ENCODE measurements at regions of chr17 and their contacts with region 1.

Region 1: DNA sequence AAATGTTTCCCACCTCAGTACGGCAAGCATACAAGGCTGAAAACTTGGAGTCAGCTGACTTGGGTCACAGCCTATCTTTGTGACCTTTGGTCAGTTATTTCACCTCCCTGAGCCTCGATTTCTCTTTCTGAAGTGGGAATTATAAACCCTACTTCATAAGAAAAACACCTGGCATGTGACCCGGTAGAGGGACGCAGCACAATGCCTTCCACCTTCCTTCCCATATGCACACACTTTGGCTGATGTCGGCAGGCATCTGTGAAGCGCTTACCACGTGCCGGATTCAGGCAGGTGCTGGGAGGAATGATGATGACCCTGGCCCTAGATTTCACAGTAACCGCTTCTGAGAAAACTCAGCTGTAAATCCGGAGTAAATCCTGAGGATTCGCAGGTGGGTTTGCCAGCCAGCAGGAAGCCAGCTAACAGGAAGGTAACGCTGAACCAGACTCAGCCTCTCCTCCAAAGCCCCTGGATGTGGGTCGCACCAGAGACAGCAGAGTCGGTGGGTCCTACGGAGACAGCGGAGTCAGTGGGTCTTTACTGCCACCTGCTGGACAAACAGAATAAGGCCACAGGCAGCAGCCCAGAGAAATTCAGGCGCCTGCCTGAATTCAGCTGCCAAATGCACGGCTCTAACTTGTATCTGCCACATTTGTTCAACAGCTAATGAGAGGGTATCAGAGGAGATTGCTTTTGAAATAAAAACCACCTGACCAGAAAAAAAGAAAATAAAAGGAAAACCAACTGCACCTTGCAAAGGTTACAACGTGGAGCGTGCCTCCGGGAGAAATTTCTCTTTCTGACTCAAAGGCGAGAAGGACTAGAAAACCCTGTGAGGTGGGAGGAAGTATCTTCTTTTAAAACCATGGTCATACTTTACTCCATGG is 16.6 kb downstream of the COPRS start:
- DNase-seq: peak; percentile 79
- H3K4me3 Mint-ChIP-seq: no peak overlapping the region
- H3K27ac Mint-ChIP-seq: no peak overlapping the region
- H3K4me1 Mint-ChIP-seq: no peaks in the 10 kb centered on the region
- H3K27me3 Mint-ChIP-seq: no peaks in the 10 kb centered on the region

Region 2: DNA sequence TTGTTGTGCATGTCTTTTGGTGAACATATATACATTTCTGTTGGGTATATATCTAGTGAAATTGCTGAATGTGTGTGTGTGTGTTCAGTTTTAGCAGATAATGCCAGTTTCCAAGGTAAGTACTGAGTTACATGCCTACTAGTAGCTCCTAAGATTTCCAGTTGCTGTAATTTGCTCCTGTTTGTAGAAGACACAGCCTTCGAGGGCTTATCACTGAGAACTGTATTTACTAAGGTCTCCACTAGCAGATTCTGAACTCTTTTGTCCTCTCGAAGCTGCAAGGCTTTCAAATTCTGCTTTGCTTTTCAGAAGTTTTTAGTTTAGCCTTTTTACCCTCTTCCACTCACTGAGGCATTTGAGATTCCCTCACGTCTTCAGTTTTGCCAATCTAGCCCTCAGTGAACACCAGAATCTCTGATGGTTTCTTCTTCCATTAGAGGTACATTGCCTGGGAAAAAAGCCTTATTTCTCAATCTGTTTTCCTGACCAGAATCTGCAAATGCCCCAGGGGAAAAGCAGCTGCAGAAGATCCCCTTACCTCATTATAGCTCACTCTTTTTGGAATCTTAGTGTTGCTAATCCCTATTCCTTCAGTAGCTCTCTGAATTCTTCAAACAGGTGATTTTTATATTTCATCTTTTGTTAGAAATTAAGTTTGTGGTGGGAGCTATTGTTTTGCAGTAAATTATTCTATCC is 694.8 kb before region 1 on chr17:
- CTCF ChIA-PET with region 1: no interaction called
- intact Hi-C with region 1: no loop called
- DNase-seq: no peak
- H3K4me3 Mint-ChIP-seq: no peak overlapping the region
- H3K27ac Mint-ChIP-seq: no peak overlapping the region
- H3K4me1 Mint-ChIP-seq: no peaks in the 10 kb centered on the region
- H3K27me3 Mint-ChIP-seq: no peaks in the 10 kb centered on the region

Region 3: DNA sequence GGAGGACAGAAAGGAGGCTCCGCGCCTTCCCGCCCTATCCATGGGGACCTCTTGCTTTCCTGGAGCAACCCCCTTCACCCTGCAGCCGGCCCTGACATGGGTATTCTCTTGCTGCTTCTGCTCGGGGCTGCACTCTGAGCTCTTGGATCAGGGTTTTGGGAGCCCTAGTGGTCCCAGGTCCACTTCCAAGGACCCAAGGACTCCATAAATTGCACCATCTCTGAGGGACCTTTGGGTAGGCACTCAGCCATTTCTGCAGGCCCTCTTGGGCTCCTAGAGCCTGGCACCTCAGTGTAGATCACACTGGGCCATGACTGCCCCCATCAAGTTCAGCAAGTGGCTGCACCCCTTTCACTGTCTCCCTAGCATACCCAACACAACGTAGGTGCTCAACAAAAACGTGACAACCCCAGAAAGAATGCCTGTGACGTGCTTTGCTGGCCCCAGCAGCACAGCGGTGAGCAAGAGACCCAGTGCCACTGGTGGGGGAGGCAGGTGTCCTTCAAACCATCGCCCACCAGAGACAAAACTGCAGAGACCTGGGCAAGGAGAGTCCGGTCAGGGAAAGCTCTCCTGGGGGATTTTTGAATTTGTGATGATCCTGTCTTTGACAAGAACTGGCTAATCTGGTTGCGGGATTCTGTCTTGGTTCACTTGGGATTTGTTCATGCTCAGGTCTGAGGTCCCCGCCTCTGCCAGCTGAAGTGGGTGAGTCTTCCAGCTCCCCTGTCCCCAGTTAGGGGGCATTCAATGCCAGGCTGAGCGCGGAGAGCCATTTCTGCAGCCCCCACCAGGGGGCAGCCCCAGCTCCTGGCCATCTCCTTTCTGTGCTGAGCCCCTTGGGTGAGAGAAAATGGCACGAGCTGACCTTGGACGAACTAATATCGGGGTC is 453.4 kb before region 1 on chr17:
- CTCF ChIA-PET with region 1: interaction called, 4 read pairs
- intact Hi-C with region 1: loop called (anchors 1 kb)
- DNase-seq: peak; percentile 51
- H3K4me3 Mint-ChIP-seq: no peak overlapping the region
- H3K27ac Mint-ChIP-seq: no peak overlapping the region
- H3K4me1 Mint-ChIP-seq: peaks cover 3% of the 10 kb centered on the region
- H3K27me3 Mint-ChIP-seq: peaks cover 35% of the 10 kb centered on the region

Region 4: GRCh38 chr17:31433091-31433790 is 409.2 kb before region 1 on chr17:
- CTCF ChIA-PET with region 1: interaction called, 9 read pairs
- intact Hi-C with region 1: loop called (anchors 1 kb)
- DNase-seq: peak; percentile 45
- H3K4me3 Mint-ChIP-seq: no peak overlapping the region
- H3K27ac Mint-ChIP-seq: no peak overlapping the region
- H3K4me1 Mint-ChIP-seq: peaks cover 13% of the 10 kb centered on the region
- H3K27me3 Mint-ChIP-seq: no peaks in the 10 kb centered on the region

Region 5: DNA sequence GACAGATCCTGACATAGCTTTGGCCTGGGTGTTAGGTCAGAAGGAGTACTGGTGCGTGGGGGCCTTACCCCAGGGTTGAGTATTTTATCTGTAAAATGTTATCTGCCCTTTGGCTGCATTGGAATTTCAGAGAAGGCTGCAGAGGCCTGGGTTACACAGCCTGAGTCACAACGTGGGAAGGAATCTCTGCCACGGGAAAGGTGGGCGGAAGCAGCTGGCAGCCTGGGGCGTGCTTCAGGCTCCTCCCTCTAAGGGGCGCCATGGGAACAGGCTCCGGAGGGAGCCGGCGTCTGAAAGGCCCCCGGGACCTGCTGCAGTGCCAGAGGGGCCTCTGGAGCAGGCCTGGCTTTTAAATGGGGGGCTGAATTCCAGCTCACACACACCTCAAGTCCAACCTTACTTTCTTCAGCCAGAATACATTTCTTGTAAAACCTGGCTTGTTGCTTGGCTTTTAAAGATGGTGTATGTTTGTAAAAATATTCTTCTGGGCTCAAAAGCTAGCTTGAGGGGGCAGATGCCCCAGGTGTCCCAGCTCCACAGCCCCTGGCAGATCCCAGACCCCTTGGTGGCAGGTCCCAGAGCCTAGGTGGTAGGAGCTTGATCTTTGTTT is 308.8 kb before region 1 on chr17:
- CTCF ChIA-PET with region 1: interaction called, 13 read pairs
- intact Hi-C with region 1: loop called (anchors 1 kb)
- DNase-seq: peak; percentile 49
- H3K4me3 Mint-ChIP-seq: no peak overlapping the region
- H3K27ac Mint-ChIP-seq: no peak overlapping the region
- H3K4me1 Mint-ChIP-seq: peaks cover 12% of the 10 kb centered on the region
- H3K27me3 Mint-ChIP-seq: no peaks in the 10 kb centered on the region

Region 6: DNA sequence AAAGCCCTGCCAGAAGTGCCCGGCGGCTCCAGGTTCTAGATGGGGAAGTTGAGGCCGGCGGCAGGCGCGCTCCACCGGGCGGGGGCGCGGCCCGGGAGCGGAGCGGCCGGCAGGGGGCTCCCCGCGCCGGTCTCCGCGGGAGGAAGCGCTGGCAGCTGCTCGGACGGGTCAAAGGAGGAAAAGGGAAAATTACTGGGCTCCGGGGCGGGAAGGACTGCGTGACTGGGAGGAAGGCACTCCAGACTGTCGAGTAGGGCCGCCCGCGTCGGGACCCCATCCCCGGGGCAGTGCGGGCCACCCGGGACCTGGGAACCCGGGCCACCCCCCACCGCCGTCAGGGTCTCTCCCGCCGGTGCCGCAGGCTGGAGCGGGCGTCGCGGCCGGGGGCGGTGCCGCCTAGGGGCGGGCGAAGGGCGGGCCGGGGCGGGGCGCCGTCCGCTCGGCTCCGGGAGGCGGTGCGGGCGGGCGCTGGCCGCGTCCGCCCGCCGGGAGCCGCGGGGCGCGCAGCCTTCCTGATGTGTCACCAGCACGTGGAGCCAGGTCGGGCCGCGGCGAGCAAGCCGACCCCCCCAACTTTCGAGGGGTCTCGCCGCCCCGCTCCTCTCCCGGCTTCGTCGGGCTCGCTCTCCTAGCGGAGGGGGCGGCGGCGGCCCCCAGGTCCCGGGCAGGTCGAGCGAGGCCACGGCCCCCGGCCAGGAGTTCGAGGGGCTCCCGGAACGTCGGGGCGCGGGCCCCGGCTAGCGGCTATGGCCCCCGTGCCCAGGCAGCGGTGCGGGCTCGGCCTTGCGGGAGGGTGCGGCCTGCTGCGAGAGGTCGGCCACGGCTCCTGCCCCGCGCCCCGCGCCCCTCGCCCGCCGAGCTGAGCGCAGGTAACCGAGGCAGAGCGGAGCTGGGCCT is 283.4 kb before region 1 on chr17:
- CTCF ChIA-PET with region 1: interaction called, 27 read pairs
- intact Hi-C with region 1: loop called (anchors 1 kb)
- DNase-seq: peak; percentile 61
- H3K4me3 Mint-ChIP-seq: peak overlapping the region; percentile 48
- H3K27ac Mint-ChIP-seq: no peak overlapping the region
- H3K4me1 Mint-ChIP-seq: peaks cover 26% of the 10 kb centered on the region
- H3K27me3 Mint-ChIP-seq: no peaks in the 10 kb centered on the region

Region 7: DNA sequence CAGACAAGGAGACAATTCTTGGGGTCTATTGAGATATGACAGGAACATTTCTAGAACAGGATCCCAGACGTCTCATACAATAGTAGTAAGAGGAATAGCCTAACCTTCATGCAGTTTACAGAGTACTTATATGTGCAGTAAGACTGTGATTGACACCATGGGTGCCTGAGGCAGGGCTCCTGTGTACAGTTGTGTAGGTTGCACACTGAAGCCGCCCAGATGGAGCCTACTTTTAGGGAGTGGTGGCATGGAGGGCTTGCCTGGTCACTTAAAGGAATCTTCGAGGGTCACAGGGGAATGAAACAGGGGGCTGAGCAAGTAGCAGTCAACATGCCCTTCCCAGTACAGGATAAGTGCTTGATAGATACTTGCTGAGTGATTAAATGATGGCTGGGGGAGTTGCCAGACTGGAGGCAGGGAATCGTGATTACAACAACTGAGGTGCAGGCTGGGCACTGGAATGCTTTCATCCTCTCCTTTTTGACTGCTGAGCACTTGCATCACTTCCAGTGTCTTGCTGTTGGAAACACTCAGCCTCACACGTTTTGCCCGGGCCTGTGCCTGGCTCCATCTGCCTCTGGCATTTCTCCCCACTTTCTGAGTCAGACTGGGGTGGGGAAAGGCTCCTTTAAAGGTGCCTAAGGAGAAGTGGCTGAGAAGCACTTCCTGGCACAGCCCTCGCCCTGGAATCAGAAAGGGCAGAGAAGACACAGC is 54.4 kb before region 1 on chr17:
- CTCF ChIA-PET with region 1: interaction called, 3 read pairs
- intact Hi-C with region 1: loop called (anchors 10 kb)
- DNase-seq: no peak
- H3K4me3 Mint-ChIP-seq: no peak overlapping the region
- H3K27ac Mint-ChIP-seq: no peak overlapping the region
- H3K4me1 Mint-ChIP-seq: peaks cover 4% of the 10 kb centered on the region
- H3K27me3 Mint-ChIP-seq: peaks cover 7% of the 10 kb centered on the region

Region 8: DNA sequence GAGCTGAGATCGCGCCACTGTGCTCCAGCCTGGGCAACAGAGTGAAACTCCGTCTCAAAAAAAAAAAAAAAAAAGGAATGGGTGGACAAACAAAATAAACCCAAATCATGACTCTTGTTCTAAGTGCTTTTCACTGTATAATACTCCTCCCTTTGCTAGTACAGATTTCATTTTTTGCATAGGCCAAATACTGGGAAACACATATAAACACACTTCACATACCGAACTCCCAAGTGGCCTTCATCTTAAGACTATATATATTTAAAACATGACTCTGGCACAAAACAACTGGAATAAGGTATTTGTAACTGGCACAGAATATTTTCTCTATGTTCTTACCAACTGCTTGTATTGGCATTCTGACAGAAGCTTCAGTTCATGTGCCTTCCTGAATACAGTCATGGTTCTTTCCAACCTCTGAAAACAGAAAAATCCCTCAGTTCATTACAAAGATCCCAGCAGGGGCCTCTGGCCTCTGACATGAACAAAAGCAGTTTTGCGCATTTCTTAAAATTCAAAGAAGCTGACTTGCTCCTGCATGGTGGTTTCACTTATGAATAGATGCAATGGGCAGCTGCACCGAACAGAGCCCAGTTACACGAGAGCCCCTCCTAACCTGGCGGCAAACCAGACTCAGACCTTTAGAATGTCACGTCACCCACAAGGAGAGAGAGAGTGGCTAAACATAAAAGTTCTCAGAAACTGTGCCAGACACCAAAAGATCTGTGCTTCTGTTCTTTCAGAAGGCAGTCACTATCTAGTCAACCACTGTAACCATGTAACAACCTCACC is 35.7 kb after region 1 on chr17:
- CTCF ChIA-PET with region 1: no interaction called
- intact Hi-C with region 1: no loop called
- DNase-seq: peak; percentile 60
- H3K4me3 Mint-ChIP-seq: no peak overlapping the region
- H3K27ac Mint-ChIP-seq: peak overlapping the region; percentile 92
- H3K4me1 Mint-ChIP-seq: peaks cover 21% of the 10 kb centered on the region
- H3K27me3 Mint-ChIP-seq: no peaks in the 10 kb centered on the region

Region 9: DNA sequence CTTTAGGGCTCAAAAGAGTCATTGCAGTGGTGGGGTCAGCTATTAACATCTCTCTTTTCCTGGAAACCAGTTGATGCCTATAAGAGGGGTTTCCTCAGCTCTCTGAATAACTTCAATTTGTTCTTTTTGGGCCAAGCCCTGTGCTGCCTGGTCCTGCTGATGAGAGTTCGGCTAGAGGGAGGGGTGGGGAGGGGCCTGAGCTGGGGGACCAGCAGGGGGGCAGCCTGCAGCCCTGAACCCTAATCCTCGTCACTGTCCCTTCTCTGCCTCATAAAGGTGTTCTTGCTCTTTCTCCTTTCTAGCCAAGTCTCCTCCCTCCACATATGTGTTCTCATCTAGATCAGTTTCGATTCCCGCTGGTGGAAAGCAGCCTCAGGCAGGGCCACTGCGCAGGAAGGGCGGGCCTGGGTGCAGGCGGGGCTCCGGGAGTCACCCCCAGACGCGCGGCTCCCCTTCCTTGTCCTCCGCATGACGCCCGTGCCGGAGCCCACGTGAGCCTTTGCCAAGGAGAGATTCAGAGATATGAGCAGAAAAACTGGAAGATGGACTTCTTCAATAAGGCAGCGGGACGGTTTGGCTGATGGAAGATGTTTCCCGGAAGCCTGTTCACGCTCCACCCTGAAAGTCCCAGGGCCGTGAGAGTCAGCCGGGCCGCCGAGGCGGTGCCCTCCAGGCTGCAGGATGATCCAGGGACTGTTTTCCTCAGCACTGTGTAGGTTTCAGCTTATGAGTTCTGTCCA is 284.9 kb after region 1 on chr17:
- CTCF ChIA-PET with region 1: no interaction called
- intact Hi-C with region 1: no loop called
- DNase-seq: peak; percentile 88
- H3K4me3 Mint-ChIP-seq: peak overlapping the region; percentile 83
- H3K27ac Mint-ChIP-seq: peak overlapping the region; percentile 91
- H3K4me1 Mint-ChIP-seq: peaks cover 17% of the 10 kb centered on the region
- H3K27me3 Mint-ChIP-seq: no peaks in the 10 kb centered on the region

Region 10: GRCh38 chr17:32813021-32813420 is 970.6 kb after region 1 on chr17:
- CTCF ChIA-PET with region 1: no interaction called
- intact Hi-C with region 1: no loop called
- DNase-seq: no peak
- H3K4me3 Mint-ChIP-seq: no peak overlapping the region
- H3K27ac Mint-ChIP-seq: no peak overlapping the region
- H3K4me1 Mint-ChIP-seq: peaks cover 6% of the 10 kb centered on the region
- H3K27me3 Mint-ChIP-seq: no peaks in the 10 kb centered on the region

Measured in activated naive CD4-positive, alpha-beta T cell treated with anti-CD3 and anti-CD28 coated beads for 36 hours (primary cell).